ENCODE measurements at regions of chr9 and their contacts with region 1.

Region 1: GRCh38 chr9:126690431-126691350 is 77.0 kb downstream of the LMX1B start:
- DNase-seq: peak; percentile 72
- H3K27ac ChIP-seq: no peak overlapping the region
- CTCF ChIP-seq: peak; percentile 83

Region 2: DNA sequence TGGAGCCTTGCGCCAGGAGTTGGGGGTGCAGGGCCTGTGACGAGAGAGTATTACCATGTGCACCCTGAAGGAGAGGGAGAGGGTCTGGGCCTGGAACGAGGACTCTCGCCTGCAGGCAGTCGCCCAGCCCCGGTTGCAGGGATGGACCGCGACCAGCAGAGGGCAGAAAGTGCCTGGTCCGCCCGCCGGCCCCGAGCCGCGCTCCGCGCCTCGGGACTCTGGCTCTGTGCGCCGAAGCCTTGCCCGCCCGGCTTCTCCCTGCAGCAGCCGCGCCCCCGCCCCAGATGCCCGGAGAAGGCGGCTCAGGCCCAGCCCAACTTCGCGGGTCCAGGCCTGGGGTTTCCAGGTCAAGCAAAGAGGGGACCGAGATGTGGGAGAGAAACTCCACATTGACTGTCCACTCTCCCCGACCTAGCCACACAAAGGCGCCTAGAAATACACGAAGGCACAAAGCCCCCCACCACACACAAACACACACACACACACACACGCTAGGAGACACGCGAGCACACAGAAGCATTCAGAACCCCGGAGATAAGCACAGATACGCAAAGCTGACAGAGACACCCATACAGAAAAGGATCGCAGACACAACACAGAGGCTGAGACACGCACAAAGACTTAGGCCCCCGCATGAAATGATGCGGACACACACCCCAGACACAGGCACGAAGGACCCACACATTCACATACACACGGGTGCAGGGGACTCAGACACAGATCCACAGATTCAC is 78.9 kb before region 1 on chr9:
- CTCF ChIA-PET with region 1: interaction called, 11 read pairs
- POLR2A ChIA-PET with region 1: no interaction called
- DNase-seq: peak; percentile 87
- H3K27ac ChIP-seq: no peak overlapping the region
- CTCF ChIP-seq: peak; percentile 98

Region 3: DNA sequence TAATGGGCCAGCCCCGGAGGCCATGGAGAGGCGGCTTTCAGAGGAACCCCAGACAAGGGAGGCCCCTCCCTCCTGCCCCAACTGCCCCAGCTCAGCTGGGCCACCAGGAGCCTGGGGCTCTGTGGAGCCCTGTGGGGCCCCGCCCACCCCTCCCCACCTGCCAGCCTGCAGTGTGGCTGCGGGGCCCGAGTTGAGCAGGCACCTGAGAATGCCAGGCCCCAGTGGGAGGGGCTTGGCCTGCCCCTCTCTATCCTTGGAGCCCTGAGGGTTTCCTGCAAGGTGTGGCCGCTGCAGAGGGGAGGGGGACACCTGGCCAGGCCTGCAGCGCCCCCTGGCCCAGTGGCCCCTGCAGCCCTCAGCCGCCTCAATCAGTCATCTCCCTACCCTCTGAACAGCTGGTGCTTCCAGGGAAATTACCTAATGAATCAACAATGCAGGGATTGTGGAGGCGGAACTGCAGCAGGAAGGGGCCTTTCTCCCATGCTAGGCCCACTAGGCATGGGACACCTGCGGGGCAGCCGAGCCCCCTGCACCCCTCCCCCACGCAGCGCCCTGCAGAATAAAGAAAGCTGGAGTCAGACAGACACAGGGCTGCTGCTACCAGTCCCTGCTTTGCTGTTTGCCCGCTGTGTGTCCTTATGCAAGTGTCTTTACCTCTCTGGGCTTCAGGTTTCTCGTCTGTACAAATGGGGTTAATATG is 29.0 kb before region 1 on chr9:
- CTCF ChIA-PET with region 1: interaction called, 14 read pairs
- POLR2A ChIA-PET with region 1: no interaction called
- DNase-seq: peak; percentile 96
- H3K27ac ChIP-seq: no peak overlapping the region
- CTCF ChIP-seq: no peak

Region 4: DNA sequence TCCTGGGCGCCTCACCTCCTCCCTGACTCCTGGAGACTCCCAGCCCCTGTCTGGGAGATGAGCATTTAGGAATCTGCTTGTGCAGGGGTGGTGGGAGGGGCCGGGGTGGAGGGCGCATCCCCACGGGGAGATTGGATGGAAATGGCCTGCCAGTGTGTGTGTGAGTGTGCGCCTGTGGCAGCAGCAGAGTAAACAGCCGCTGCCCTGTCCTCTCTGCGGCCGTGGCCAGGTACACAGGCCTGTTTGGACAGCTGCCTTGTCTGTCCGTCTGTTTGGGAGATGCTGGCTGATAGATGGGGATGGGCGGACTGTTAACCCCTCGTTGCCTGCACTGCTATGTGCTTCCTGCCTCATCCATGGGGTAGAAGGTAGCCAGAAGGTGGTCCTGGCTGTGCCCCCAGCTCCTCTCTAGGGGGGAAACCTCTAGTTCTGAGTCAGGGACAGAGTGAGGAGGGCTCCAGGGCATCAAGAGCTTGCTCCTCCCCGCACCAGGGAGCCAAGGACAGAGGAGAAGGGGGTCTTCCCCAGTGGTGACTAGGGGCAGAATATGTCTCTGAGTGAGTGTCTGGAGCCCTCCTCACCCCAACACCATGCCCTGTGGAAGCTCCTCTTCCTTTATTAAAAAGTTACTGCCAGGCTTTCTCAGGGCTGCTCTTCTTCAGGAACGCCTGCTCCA is 16.9 kb before region 1 on chr9:
- CTCF ChIA-PET with region 1: interaction called, 20 read pairs
- POLR2A ChIA-PET with region 1: no interaction called
- DNase-seq: peak; percentile 41
- H3K27ac ChIP-seq: no peak overlapping the region
- CTCF ChIP-seq: no peak